Activated CD4-positive, alpha-beta memory T cell treated with anti-CD3 and anti-CD28 coated beads for 36 hours (primary cell): ENCODE measurements at regions of chr1 and their contacts with region 1.

Region 1: DNA sequence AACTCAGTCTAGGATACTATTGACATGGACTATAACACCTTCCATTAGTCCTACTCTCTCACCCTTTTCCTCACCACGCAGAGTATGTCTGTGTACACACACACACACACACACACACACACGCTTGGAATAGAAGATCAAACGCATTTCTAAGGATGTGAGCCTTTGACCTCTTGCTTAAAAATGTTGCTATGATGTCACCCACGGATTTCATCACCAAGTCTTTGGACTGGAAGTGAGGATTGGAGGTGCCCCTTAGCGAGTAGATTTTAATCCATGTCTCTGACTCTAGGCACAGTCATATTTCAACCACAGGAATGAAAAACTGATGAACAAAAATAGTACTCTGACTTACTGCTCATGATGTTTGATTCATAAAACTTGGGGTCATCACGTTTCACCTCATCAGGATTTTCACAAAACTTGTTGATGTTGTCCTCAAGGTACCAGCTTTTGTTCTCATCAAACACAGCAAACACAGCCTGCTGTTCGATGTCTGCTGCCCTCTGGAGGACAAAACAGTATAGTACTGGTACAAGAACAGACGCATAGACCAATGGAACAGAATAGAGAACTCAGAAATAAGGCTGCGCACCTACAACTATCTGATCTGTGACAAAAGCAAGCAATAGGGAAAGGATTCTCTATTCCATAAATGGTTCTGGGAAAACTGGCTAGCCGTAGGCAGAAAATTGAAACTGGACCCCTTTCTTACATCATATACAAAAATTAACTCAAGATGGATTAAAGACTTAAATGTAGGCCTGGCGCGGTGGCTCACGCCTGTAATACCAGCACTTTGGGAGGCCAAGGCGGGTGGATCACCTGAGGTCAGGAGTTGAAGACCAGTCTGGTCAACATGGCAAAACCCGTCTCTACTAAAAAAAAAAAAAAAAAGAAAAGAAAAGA is 39.9 kb downstream of the F5 start:
- DNase-seq: peak; percentile 49
- H3K4me3 Mint-ChIP-seq: no peak overlapping the region
- H3K27ac Mint-ChIP-seq: no peak overlapping the region
- H3K4me1 Mint-ChIP-seq: no peaks in the 10 kb centered on the region
- H3K27me3 Mint-ChIP-seq: no peaks in the 10 kb centered on the region

Region 2: DNA sequence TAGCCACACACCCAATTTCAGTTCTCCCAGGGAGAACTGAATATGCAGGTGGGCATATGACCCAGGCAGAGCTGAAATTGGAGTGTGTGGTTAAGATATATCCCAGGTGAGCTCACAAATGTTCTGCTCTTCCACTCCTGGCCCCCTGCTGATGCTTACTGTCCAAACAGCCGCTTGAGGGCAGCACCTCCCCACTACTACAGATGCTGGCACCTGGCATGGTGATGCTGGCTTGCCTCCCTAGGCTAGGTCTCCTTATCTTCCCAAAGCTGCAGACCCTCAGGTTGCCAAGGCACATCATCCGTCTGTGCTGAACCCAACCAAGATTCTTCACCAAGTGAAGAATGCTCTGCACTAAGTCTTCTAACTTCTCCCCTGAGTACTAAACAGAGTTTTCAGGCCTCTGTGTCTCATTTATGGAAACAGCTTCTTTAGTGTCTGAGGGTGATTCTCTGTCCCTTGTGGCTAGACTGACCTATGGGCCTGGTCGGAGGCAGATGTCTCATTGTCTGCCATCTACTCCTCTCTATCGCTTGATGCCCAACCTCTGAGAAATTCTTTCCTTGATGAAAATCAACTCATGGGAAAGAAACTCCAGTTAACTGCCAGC is 942.7 kb before region 1 on chr1:
- CTCF ChIA-PET with region 1: interaction called, 10 read pairs
- POLR2A ChIA-PET with region 1: no interaction called
- intact Hi-C with region 1: loop called (anchors 5 kb)
- DNase-seq: peak; percentile 77
- H3K4me3 Mint-ChIP-seq: no peak overlapping the region
- H3K27ac Mint-ChIP-seq: no peak overlapping the region
- H3K4me1 Mint-ChIP-seq: no peaks in the 10 kb centered on the region
- H3K27me3 Mint-ChIP-seq: peaks cover 7% of the 10 kb centered on the region

Region 3: GRCh38 chr1:169360415-169360814 is 185.9 kb before region 1 on chr1:
- CTCF ChIA-PET with region 1: no interaction called
- POLR2A ChIA-PET with region 1: no interaction called
- intact Hi-C with region 1: no loop called
- DNase-seq: no peak
- H3K4me3 Mint-ChIP-seq: no peak overlapping the region
- H3K27ac Mint-ChIP-seq: no peak overlapping the region
- H3K4me1 Mint-ChIP-seq: peaks cover 26% of the 10 kb centered on the region
- H3K27me3 Mint-ChIP-seq: no peaks in the 10 kb centered on the region

Region 4: DNA sequence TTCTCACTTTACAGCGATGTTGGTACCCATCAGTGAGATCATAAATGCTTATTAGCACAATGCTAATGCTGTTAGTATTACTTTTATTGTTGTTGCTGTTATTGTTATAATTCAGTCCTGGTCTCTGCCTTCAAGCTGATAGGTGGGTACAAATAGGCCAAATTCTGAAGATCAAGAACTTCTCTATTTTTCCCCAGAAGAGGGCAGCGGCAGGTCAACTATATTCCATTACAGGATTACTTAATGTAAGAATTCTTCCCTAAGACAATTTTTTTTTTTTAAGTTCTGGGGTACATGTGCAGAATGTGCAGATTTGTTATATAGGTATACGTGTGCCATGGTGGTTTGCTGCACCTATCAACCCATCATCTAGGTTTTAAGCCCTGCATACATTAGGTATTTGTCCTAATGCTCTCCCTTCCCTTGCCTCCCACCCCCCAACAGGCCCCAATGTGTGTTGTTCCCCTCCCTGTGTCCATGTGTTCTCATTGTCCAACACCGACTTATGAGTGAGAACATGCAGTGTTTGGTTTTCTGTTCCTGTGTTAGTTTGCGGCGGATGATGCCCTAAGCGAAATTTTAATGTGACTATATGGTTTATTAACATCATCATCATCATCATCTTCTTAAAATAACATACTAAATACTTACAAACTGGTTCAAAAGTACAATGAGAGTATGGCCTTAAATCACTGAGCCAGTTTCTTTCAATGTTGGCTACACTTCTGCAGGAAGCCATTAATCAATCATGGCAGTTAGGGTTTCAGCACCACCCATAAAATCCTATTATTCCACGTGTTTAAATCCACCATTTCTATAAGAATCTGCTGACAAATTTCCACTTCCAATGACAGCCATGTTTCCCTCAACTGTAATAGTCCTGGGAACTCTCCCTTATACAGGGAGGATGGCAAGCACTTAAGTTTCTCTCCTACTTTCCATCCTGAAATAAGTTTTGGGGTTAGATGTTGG is 79.8 kb before region 1 on chr1:
- CTCF ChIA-PET with region 1: interaction called, 16 read pairs
- POLR2A ChIA-PET with region 1: no interaction called
- intact Hi-C with region 1: loop called (anchors 1 kb)
- DNase-seq: no peak
- H3K4me3 Mint-ChIP-seq: no peak overlapping the region
- H3K27ac Mint-ChIP-seq: no peak overlapping the region
- H3K4me1 Mint-ChIP-seq: peaks cover 2% of the 10 kb centered on the region
- H3K27me3 Mint-ChIP-seq: no peaks in the 10 kb centered on the region

Region 5: DNA sequence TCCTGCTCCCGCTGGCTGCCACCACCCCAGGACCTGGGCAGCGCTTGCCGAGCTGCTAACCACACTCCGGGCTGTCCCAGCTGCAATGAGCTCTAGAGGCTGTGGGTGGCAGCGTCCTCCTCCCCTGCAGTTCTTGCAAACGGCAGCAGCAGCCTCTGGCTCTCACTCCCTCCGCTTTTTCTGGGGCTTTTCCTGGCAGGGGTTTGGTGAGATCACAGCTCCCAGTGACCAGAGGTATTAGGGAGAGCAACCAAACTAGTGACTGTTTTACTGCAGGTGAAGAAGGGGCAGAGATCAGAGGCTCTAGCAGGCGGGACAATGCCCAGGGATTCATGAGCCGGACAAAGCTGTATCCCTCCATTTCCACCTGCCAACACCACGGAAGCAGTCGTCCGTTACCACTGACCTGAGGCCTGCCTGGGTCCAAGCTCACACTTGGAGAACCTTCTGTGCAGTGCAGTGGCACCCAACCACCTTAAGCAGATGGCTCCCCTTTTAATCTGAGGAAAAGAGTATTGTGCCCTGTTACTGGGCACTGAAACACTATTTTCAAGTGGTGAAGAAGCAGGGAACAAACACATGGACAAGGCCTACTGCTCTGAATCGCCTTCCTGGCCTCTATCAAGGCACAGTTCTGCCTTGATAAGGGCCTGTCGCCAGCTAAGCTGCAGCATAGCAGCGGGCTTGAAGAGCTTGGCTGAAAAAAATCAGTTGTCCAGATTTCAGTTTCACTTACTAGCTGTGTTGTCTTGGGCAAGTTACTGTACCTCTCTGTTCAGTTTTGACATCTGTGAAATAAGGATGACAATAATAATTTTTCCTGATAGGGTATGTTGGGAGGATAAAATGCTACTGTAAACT is 40.3 kb after region 1 on chr1 and contains the start of gene F5:
- CTCF ChIA-PET with region 1: interaction called, 11 read pairs
- POLR2A ChIA-PET with region 1: no interaction called
- intact Hi-C with region 1: no loop called
- DNase-seq: peak; percentile 90
- H3K4me3 Mint-ChIP-seq: peak within 1 kb of the TSS; percentile 96
- H3K27ac Mint-ChIP-seq: peak within 1 kb of the TSS; percentile 94
- H3K4me1 Mint-ChIP-seq: peaks cover 61% of the 10 kb centered on the region
- H3K27me3 Mint-ChIP-seq: no peaks in the 10 kb centered on the region
- total RNA-seq, gene F5: 50.8 to 51.1 TPM

Region 6: DNA sequence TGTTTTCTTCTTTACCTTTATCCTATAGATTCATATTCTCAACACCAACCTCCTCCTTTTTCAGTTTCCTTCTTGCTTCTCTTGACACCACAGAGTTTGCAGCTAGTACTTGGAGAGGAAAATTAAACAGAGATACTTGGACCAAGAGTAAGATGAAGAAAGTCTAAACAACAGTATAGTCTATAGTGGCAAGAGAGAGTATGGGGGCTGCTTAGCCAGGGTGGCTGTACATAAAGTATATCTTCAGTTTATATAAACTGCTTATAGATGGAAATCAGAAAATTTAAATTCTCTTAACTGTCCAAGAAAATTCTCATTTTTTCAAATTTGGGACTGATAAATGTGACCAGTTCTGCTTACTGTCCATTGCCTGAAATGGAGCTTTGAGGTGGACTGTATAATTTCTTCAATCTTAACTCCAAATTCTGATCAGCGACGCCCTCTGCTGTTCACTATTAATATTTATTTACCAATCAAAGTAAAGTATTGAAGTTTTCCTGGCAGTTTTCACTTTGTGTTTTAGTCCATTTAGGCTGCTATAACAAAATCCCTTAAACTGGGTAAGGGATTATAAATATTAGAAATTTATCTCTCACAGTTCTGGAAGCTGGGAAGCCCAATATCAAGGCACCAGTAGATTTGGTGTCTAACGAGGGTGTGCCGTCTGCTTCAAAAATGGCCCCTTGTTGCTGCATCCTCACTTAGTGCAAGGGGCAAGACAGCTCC is 263.2 kb after region 1 on chr1:
- CTCF ChIA-PET with region 1: interaction called, 4 read pairs
- POLR2A ChIA-PET with region 1: no interaction called
- intact Hi-C with region 1: loop called (anchors 1 kb)
- DNase-seq: no peak
- H3K4me3 Mint-ChIP-seq: no peak overlapping the region
- H3K27ac Mint-ChIP-seq: no peak overlapping the region
- H3K4me1 Mint-ChIP-seq: no peaks in the 10 kb centered on the region
- H3K27me3 Mint-ChIP-seq: no peaks in the 10 kb centered on the region

Region 7: GRCh38 chr1:170556917-170557316 is 1010.6 kb after region 1 on chr1:
- CTCF ChIA-PET with region 1: no interaction called
- POLR2A ChIA-PET with region 1: no interaction called
- intact Hi-C with region 1: no loop called
- DNase-seq: no peak
- H3K4me3 Mint-ChIP-seq: no peak overlapping the region
- H3K27ac Mint-ChIP-seq: no peak overlapping the region
- H3K4me1 Mint-ChIP-seq: peaks cover 2% of the 10 kb centered on the region
- H3K27me3 Mint-ChIP-seq: no peaks in the 10 kb centered on the region